ENCODE measurements at regions of chr1 and their contacts with region 1.

Region 1: GRCh38 chr1:62725255-62725654 is 37.1 kb upstream of the DOCK7 start:
- DNase-seq: peak; percentile 94
- ATAC-seq: peak; percentile 70
- H3K4me3 ChIP-seq: peak overlapping the region; percentile 36; the same call in 1 of the 2 replicates
- H3K27ac ChIP-seq: peak overlapping the region; percentile 54; the same call in 1 of the 2 replicates
- H3K4me1 ChIP-seq: peaks cover 11% of the 10 kb centered on the region
- H3K27me3 ChIP-seq: no peaks in the 10 kb centered on the region
- CTCF ChIP-seq: no peak
- POLR2A ChIP-seq: no peak
- RAD21 ChIP-seq: no peak

Region 2: GRCh38 chr1:62654744-62655143 is 70.5 kb before region 1 on chr1:
- CTCF ChIA-PET with region 1: no interaction called
- POLR2A ChIA-PET with region 1: interaction called, 10 read pairs
- dilution Hi-C with region 1: no loop called
- in situ Hi-C with region 1: no loop called
- intact Hi-C with region 1: no loop called
- DNase-seq: no peak
- ATAC-seq: no peak
- H3K4me3 ChIP-seq: no peak overlapping the region
- H3K27ac ChIP-seq: no peak overlapping the region
- H3K4me1 ChIP-seq: no peaks in the 10 kb centered on the region
- H3K27me3 ChIP-seq: no peaks in the 10 kb centered on the region
- CTCF ChIP-seq: no peak
- POLR2A ChIP-seq: no peak
- RAD21 ChIP-seq: no peak

Region 3: GRCh38 chr1:63674238-63674864 is 949.1 kb after region 1 on chr1:
- CTCF ChIA-PET with region 1: no interaction called
- POLR2A ChIA-PET with region 1: no interaction called
- dilution Hi-C with region 1: no loop called
- in situ Hi-C with region 1: no loop called
- intact Hi-C with region 1: no loop called
- DNase-seq: peak; percentile 93
- ATAC-seq: peak; percentile 99
- H3K4me3 ChIP-seq: no peak overlapping the region
- H3K27ac ChIP-seq: no peak overlapping the region
- H3K4me1 ChIP-seq: no peaks in the 10 kb centered on the region
- H3K27me3 ChIP-seq: no peaks in the 10 kb centered on the region
- CTCF ChIP-seq: peak; percentile 84
- POLR2A ChIP-seq: no peak
- RAD21 ChIP-seq: peak; percentile 83